Head of caudate nucleus (tissue), 42 donors: ENCODE measurements at regions of chr22 and their contacts with region 1.

Region 1: GRCh38 chr22:17436382-17436980 is 67.2 kb downstream of the CECR2 start:
- DNase-seq: peak in 14 of 42 donors; percentile 14 to 61 (median 31)

Region 2: GRCh38 chr22:17322511-17322910 is 114.0 kb before region 1 on chr22:
- intact Hi-C with region 1: no loop called
- DNase-seq: no peak

Region 3: GRCh38 chr22:17471886-17472535 is 35.5 kb after region 1 on chr22:
- intact Hi-C with region 1: loop called (anchors 5 kb)
- DNase-seq: no peak

Region 4: DNA sequence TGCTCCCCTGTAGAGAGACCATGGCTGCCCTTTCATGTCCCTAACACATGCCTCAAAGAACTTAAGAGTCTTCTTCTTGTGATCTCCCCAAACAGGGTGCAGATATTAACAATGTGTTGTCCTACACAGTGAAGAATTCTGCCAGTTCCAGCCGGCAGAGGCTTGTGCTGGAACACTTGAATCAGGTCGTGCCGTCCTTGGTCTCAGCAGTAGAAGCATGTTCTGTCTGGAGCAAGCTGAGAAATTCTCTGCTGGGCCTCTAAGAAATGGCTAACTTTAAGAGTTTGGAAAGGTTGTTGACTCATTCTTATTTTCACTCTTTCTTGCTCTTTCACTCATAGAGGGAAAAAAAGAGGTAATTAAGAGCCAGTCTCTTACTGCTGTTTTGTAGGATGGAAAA is 55.8 kb after region 1 on chr22:
- intact Hi-C with region 1: loop called (anchors 10 kb)
- DNase-seq: peak in 25 of 42 donors; percentile 13 to 71 (median 35)